HCT116 (cell line): ENCODE measurements at regions of chr1 and their contacts with region 1.

Region 1: GRCh38 chr1:52348704-52349300 is 17.2 kb downstream of the CC2D1B start:
- DNase-seq: no peak
- ATAC-seq: peak; percentile 89
- H3K4me3 ChIP-seq: no peak overlapping the region
- H3K27ac ChIP-seq: no peak overlapping the region
- H3K4me1 ChIP-seq: no peaks in the 10 kb centered on the region
- H3K27me3 ChIP-seq: no peaks in the 10 kb centered on the region
- CTCF ChIP-seq: peak; percentile 14 to 48 (median 48); a peak in 5 of 6 replicates
- POLR2A ChIP-seq: no peak
- RAD21 ChIP-seq: peak; percentile 65

Region 2: GRCh38 chr1:51897699-51898031 is 451.1 kb before region 1 on chr1:
- CTCF ChIA-PET with region 1: interaction called, 4 read pairs
- POLR2A ChIA-PET with region 1: no interaction called
- RAD21 ChIA-PET with region 1: no interaction called
- intact Hi-C with region 1: loop called (anchors 10 kb)
- DNase-seq: peak; percentile 47
- ATAC-seq: peak; percentile 64
- H3K4me3 ChIP-seq: peak overlapping the region in 1 of 2 experiments; percentile 25; a peak in 2 of 4 replicates
- H3K27ac ChIP-seq: peak overlapping the region; percentile 24; the same call in 1 of the 2 replicates
- H3K4me1 ChIP-seq: peaks cover 14 to 37% of the 10 kb centered on the region in 2 experiments
- H3K27me3 ChIP-seq: no peaks in the 10 kb centered on the region
- CTCF ChIP-seq: no peak
- POLR2A ChIP-seq: no peak
- RAD21 ChIP-seq: no peak

Region 3: DNA sequence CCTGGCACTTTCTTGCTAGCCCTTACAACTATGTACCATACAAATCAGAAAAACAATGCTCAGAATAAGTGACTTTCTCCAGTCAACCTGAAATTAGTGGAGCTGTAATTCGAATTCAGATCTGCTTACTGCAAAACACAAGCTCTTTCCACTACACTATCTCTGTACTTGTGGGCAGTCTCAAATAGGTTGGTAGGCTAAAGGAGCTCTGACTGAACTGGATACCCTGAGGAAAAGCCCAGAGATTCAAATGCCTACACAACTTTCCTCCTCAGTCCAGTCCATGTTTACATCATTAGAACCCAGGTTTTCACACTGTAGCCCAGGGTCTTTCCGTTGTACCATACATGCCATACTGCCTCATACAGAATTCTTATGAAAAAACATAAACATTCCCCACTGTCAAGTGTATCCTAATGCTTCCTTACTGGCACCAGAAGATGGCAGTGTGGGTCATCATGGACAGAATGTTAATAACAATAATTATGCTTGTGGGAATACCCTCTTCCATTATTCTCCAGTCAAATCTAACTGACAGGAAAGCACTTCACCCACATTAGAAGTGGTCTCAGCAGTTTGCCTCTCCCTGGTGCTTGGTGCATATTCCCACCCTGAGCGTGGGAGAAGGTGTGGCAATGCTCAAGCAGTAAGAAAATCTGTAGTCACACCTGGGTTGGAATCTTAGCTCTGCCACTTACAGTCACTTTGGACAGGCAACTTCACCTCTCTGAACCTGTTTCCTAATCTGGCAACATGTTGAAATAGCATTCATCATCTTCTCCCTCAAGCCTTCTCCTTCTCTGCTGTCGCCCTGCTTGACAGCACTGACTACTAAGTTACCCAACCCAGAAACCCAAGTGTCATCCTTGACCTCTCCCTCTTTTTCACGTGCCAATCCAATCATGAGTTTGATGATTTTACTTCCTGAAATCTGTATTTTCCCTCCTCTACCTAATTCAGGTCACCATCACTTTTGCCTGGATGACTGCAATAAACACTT is 221.3 kb before region 1 on chr1:
- CTCF ChIA-PET with region 1: interaction called, 14 read pairs
- POLR2A ChIA-PET with region 1: no interaction called
- RAD21 ChIA-PET with region 1: interaction called, 3 to 4 read pairs
- intact Hi-C with region 1: loop called (anchors 1 kb)
- DNase-seq: peak; percentile 57
- ATAC-seq: peak; percentile 98
- H3K4me3 ChIP-seq: no peak overlapping the region
- H3K27ac ChIP-seq: no peak overlapping the region
- H3K4me1 ChIP-seq: no peaks in the 10 kb centered on the region
- H3K27me3 ChIP-seq: no peaks in the 10 kb centered on the region
- CTCF ChIP-seq: peak; percentile 66 to 86 (median 81)
- POLR2A ChIP-seq: no peak
- RAD21 ChIP-seq: peak; percentile 88

Region 4: GRCh38 chr1:52141513-52142219 is 207.1 kb before region 1 on chr1 and contains the start of gene ZFYVE9:
- CTCF ChIA-PET with region 1: no interaction called
- POLR2A ChIA-PET with region 1: no interaction called
- RAD21 ChIA-PET with region 1: no interaction called
- intact Hi-C with region 1: loop called (anchors 5 kb)
- DNase-seq: no peak
- ATAC-seq: peak; percentile 90
- H3K4me3 ChIP-seq: peak within 1 kb of the TSS; percentile 78 to 87
- H3K27ac ChIP-seq: peak within 1 kb of the TSS; percentile 91
- H3K4me1 ChIP-seq: peaks cover 10 to 30% of the 10 kb centered on the region in 2 experiments; a peak in 3 of 4 replicates
- H3K27me3 ChIP-seq: no peaks in the 10 kb centered on the region
- CTCF ChIP-seq: peak; percentile 19 to 54 (median 42); a peak in 5 of 6 replicates
- POLR2A ChIP-seq: peak; percentile 21
- RAD21 ChIP-seq: peak; percentile 58
- total RNA-seq, gene ZFYVE9: 14.2 TPM

Region 5: GRCh38 chr1:52190500-52191252 is 158.1 kb before region 1 on chr1:
- CTCF ChIA-PET with region 1: no interaction called
- POLR2A ChIA-PET with region 1: no interaction called
- RAD21 ChIA-PET with region 1: no interaction called
- intact Hi-C with region 1: no loop called
- DNase-seq: no peak
- ATAC-seq: peak; percentile 61
- H3K4me3 ChIP-seq: no peak overlapping the region
- H3K27ac ChIP-seq: no peak overlapping the region
- H3K4me1 ChIP-seq: no peaks in the 10 kb centered on the region
- H3K27me3 ChIP-seq: no peaks in the 10 kb centered on the region
- CTCF ChIP-seq: no peak
- POLR2A ChIP-seq: no peak
- RAD21 ChIP-seq: no peak